MCF 10A (cell line): ENCODE measurements at regions of chr12 and their contacts with region 1.

Region 1: GRCh38 chr12:6285063-6285477 is 25.4 kb upstream of the PLEKHG6 start:
- DNase-seq: peak; percentile 76
- H3K4me3 Mint-ChIP-seq: no peak overlapping the region
- H3K27ac Mint-ChIP-seq: no peak overlapping the region
- H3K4me1 Mint-ChIP-seq: peaks cover 34% of the 10 kb centered on the region
- H3K27me3 Mint-ChIP-seq: no peaks in the 10 kb centered on the region
- CTCF ChIP-seq: peak; percentile 94

Region 2: GRCh38 chr12:5988659-5989116 is 296.4 kb before region 1 on chr12:
- CTCF ChIA-PET with region 1: interaction called, 104 read pairs
- POLR2A ChIA-PET with region 1: interaction called, 4 read pairs
- intact Hi-C with region 1: loop called (anchors 1 kb)
- DNase-seq: peak; percentile 66
- H3K4me3 Mint-ChIP-seq: no peak overlapping the region
- H3K27ac Mint-ChIP-seq: no peak overlapping the region
- H3K4me1 Mint-ChIP-seq: no peaks in the 10 kb centered on the region
- H3K27me3 Mint-ChIP-seq: no peaks in the 10 kb centered on the region
- CTCF ChIP-seq: peak; percentile 97

Region 3: GRCh38 chr12:6062757-6063735 is 222.0 kb before region 1 on chr12:
- CTCF ChIA-PET with region 1: interaction called, 65 read pairs
- POLR2A ChIA-PET with region 1: interaction called, 4 read pairs
- intact Hi-C with region 1: loop called (anchors 1 kb)
- DNase-seq: peak; percentile 55
- H3K4me3 Mint-ChIP-seq: no peak overlapping the region
- H3K27ac Mint-ChIP-seq: no peak overlapping the region
- H3K4me1 Mint-ChIP-seq: no peaks in the 10 kb centered on the region
- H3K27me3 Mint-ChIP-seq: no peaks in the 10 kb centered on the region
- CTCF ChIP-seq: peak; percentile 98

Region 4: DNA sequence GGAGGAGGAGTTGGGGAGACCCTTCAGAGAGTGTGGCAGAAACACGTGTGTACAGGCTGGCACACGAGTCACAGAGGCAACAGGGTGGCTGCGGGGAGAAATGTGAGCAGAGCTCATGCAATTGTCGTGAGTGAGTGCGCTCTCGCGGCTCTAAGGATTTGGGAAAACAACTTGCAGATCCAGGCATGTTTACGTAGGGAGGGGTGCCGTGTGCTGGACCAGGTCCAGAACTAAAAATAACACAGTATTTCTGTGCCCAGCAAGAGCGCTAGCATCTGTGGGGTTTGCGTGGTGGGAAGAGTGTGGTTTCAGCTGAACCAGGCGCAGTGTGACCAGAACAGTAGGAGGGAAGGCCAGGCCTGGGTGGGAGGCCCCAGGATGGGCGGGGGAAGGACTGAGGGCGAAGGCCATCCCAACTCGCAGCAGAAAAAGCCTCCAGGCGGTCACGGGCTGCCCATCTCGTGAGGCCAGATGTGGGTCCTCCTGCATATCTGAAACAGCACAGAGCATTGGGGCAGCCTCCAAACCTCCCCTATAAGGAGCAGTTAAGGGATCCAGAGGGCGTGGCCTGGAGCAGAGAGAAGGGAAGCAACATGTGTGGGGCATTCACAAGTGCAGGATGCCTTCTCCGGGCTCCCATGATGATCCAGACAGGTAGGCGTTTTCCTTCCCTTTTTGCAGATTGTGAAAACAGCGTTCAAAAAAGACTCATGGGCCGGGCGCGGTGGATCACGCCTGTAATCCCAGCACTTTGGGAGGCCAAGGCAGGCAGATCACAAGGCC is 102.8 kb before region 1 on chr12:
- CTCF ChIA-PET with region 1: interaction called, 23 read pairs
- POLR2A ChIA-PET with region 1: interaction called, 40 read pairs
- intact Hi-C with region 1: no loop called
- DNase-seq: peak; percentile 92
- H3K4me3 Mint-ChIP-seq: peak overlapping the region; percentile 36
- H3K27ac Mint-ChIP-seq: no peak overlapping the region
- H3K4me1 Mint-ChIP-seq: peaks cover 19% of the 10 kb centered on the region
- H3K27me3 Mint-ChIP-seq: no peaks in the 10 kb centered on the region
- CTCF ChIP-seq: no peak

Region 5: GRCh38 chr12:6230321-6231110 is 54.6 kb before region 1 on chr12:
- CTCF ChIA-PET with region 1: interaction called, 290 read pairs
- POLR2A ChIA-PET with region 1: interaction called, 480 read pairs
- intact Hi-C with region 1: no loop called
- DNase-seq: peak; percentile 65
- H3K4me3 Mint-ChIP-seq: peak overlapping the region; percentile 68
- H3K27ac Mint-ChIP-seq: peak overlapping the region; percentile 98
- H3K4me1 Mint-ChIP-seq: peaks cover 44% of the 10 kb centered on the region
- H3K27me3 Mint-ChIP-seq: no peaks in the 10 kb centered on the region
- CTCF ChIP-seq: no peak

Region 6: DNA sequence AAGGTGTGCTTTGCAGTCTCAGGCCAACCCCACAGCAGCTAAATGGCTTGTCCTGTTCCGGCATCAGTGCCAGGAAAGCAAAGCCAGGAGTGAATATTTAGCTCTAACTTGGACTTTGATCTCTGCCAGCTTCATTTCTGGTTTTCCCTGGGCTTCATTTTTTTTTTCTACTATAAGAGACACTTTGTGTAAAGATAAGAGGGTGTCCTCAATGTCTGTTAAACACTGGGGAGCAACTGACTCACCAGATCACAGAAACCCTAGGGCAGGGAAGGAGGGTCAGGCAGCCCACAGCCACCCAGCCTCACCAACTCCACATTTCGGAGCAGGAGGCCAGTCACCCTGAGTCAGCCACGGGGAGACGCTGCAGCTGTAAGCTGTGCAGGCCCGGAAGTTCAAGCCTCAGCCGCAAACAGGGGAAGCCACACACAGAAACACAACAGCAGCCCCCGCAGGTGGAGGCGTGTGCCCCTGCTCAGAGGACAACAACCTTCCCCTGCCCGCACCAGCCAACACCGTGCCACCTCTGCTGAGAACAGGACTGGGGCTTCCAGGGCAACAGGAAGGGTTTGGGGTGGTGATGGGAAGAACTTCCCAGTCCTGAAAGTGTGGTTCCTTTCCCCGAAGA is 50.5 kb after region 1 on chr12:
- CTCF ChIA-PET with region 1: interaction called, 8 read pairs
- POLR2A ChIA-PET with region 1: interaction called, 23 read pairs
- intact Hi-C with region 1: no loop called
- DNase-seq: peak; percentile 85
- H3K4me3 Mint-ChIP-seq: no peak overlapping the region
- H3K27ac Mint-ChIP-seq: no peak overlapping the region
- H3K4me1 Mint-ChIP-seq: peaks cover 24% of the 10 kb centered on the region
- H3K27me3 Mint-ChIP-seq: no peaks in the 10 kb centered on the region
- CTCF ChIP-seq: peak; percentile 44